Tibial artery (tissue), 4 donors: ENCODE measurements at regions of chr1 and their contacts with region 1.

Region 1: DNA sequence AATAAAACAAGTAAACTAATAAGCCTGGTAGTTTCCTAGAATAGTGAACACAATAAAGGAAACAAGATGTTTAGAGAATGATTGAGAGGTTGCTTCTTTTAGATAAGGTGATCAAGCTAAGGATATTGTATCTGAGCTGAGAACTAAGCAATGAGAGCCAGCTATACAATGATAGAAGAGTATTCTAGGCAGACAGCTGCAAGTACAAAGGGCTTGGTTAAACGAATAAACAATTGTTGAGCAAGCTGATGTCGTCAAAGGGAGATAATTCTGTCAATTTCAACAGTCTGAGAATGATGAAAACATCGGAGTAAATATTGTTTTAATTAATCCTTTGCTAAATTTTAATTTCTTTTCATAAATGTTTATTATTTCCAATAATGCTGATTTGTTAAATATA is 5.5 kb upstream of the FH start:
- DNase-seq: no peak
- H3K4me3 ChIP-seq: no peak overlapping the region
- H3K27ac ChIP-seq: no peak overlapping the region
- H3K4me1 ChIP-seq: no peaks in the 10 kb centered on the region
- H3K27me3 ChIP-seq: peaks cover 0 to 8% of the 10 kb centered on the region in 2 donors
- CTCF ChIP-seq: no peak

Region 2: GRCh38 chr1:241063276-241063675 is 461.8 kb before region 1 on chr1:
- intact Hi-C with region 1: no loop called
- DNase-seq: no peak
- H3K4me3 ChIP-seq: no peak overlapping the region
- H3K27ac ChIP-seq: no peak overlapping the region
- H3K4me1 ChIP-seq: no peaks in the 10 kb centered on the region
- H3K27me3 ChIP-seq: no peaks in the 10 kb centered on the region
- CTCF ChIP-seq: no peak

Region 3: DNA sequence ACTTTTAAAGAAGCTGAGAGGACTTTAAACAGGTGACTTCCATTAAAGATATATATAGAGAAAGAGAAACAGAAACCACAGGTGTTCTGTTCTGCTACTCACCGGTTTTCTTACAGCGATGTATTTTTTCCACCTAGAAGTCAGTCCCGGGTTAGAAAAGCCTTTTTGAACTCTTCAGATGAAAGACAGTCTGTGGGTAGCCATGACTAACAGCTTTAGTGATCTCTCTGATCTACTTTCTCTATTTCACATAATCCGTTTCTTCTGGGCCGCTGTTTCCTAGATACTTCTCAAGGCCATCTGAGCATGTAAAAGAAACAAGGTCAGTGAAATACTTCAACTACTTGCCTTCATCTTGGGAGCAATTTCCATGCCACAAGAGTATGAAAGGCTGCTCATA is 152.2 kb after region 1 on chr1:
- intact Hi-C with region 1: no loop called
- DNase-seq: no peak
- H3K4me3 ChIP-seq: no peak overlapping the region
- H3K27ac ChIP-seq: no peak overlapping the region
- H3K4me1 ChIP-seq: no peaks in the 10 kb centered on the region
- H3K27me3 ChIP-seq: no peaks in the 10 kb centered on the region
- CTCF ChIP-seq: no peak

Region 4: DNA sequence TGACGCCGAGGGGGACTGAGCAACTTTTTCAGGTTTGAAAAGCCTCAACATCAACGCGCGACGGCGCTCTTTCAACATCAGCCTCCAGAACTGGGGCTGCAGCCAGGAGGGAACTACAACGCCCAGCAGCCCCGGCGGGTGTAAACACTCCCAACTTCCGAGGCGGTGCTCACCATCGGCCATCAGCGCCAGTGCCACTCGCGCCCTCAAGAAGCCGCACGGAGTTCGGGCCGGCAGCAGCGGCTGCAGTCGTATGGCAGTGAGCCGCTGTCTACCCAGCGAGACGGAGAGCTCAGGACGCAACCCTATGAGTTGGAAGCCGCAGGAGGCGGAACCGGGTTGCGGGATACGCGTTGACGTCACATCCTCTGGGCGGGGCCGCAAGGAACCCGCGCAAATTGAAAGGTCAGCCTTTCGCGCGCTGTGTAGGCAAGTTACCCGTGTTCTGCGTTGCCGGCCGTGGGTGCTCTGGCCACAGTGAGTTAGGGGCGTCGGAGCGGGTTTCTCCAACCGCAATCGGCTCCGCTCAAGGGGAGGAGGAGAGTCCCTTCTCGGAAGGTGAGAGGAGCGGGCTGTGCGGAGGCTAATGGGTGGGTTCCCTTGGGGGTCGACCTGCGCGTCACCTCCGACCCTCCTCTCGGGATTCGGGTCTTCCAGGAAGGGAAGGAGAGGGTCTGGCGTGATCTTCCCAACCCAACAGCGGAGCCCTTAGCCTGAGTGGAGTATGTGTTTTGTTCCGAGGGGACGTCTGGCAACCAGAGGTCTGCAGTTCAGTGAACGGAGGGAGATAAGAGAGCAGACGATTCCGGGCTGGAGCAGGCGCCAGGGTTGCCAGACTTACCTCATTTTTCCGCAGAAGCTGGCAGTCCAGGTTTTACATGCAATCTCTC is 323.0 kb after region 1 on chr1 and contains the start of gene EXO1:
- intact Hi-C with region 1: loop called (anchors 5 kb)
- DNase-seq: peak; percentile 87 to 90
- H3K4me3 ChIP-seq: peak within 1 kb of the TSS; percentile 72 to 90
- H3K27ac ChIP-seq: peak within 1 kb of the TSS; percentile 97
- H3K4me1 ChIP-seq: peaks cover 0 to 10% (median 6%) of the 10 kb centered on the region in 4 donors
- H3K27me3 ChIP-seq: no peaks in the 10 kb centered on the region
- CTCF ChIP-seq: peak in 1 of 2 experiments; percentile 8

Region 5: GRCh38 chr1:242033447-242033846 is 508.4 kb after region 1 on chr1:
- intact Hi-C with region 1: no loop called
- DNase-seq: no peak
- H3K4me3 ChIP-seq: no peak overlapping the region
- H3K27ac ChIP-seq: no peak overlapping the region
- H3K4me1 ChIP-seq: no peaks in the 10 kb centered on the region
- H3K27me3 ChIP-seq: no peaks in the 10 kb centered on the region
- CTCF ChIP-seq: no peak